Activated CD8-positive, alpha-beta T cell treated with anti-CD3 and anti-CD28 coated beads, Interleukin-2, amount 10 ng/mL, durations not matched to agents 7 days and 5 days (primary cell): ENCODE measurements at regions of chr7 and their contacts with region 1.

Region 1: DNA sequence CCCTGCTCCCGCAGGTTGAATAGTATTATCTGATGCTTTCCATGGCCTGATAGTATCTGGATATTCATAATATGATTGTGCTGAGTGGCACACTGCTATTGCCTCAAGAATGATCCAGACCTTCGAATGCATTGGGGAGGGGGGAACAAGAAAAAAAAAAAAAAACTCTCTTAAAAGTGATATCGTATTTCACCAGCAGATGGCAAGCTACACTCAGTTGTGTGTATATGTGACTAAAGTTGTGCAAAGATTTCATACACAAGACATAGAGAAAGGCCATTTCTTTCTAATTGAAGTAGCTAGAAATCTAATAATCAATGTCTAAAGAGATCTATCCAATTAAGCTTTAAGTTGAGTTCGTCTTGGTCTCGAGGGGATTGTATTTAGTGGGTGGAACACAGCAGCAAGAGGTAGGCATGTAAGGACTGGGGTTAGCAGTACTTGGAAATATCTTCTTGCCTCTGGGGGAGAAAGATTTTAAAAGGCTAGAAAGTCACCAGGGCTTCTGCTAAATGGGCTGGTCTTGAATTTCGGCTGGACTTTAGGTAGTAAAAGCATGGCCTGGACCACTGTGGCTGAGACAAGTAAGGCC is 15.3 kb downstream of the SFRP4 start:
- DNase-seq: no peak
- ATAC-seq: no peak
- H3K4me3 Mint-ChIP-seq: no peak overlapping the region
- H3K27ac Mint-ChIP-seq: no peak overlapping the region
- H3K4me1 Mint-ChIP-seq: no peaks in the 10 kb centered on the region
- H3K27me3 Mint-ChIP-seq: peaks cover 6% of the 10 kb centered on the region

Region 2: GRCh38 chr7:37920305-37920848 is 19.0 kb after region 1 on chr7 and contains the start of gene EPDR1:
- CTCF ChIA-PET with region 1: interaction called, 10 read pairs
- POLR2A ChIA-PET with region 1: no interaction called
- DNase-seq: peak; percentile 53
- ATAC-seq: peak; percentile 50
- H3K4me3 Mint-ChIP-seq: peak within 1 kb of the TSS; percentile 73
- H3K27ac Mint-ChIP-seq: peak within 1 kb of the TSS; percentile 21
- H3K4me1 Mint-ChIP-seq: peaks cover 28% of the 10 kb centered on the region
- H3K27me3 Mint-ChIP-seq: peaks cover 47% of the 10 kb centered on the region
- total RNA-seq, gene EPDR1: 0.52 to 1.0 TPM